Heart right ventricle (tissue), 16 donors: ENCODE measurements at regions of chr1 and their contacts with region 1.

Region 1: DNA sequence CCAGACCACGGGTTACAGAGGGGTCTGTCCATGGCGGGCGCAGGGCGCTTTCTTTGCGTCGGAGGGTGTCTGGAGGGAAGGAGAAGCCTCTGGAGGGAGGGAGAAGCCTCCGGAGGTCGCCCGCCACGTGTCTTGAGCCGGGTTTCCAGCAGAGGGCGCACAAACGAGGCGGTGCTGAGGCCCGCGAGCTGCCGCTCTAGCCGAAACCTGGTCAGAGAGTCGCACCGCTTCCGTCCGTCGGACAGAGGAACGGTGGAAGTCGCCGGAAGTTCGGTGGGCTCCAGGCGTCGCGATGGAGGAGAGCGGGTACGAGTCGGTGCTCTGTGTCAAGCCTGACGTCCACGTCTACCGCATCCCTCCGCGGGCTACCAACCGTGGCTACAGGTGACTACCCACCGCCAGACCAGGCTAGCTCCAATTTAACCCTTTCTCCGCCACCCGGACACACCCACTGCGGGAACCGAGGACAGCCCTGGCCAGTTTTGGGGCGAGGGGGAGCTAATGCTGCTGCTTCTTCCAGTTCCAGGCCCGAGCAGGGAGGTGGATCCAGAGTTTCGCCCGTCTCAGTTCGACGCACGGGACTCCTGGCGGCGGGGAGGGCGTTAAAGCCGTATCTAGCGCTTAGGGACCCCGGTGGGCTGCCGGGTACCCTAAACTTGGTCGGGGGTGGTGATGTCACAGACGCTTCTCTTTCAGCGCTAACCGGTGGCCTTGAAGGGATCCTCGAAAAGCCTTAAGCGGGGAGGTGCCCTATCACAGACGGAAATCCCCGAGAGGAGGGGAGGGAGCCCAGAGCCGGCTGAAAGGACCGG is at the start of gene NECAP2:
- DNase-seq: peak; percentile 96
- ATAC-seq: peak; percentile 95 to 98 (median 96)
- H3K4me3 ChIP-seq: peak within 1 kb of the TSS; percentile 64 to 100 (median 93)
- H3K27ac ChIP-seq: peak within 1 kb of the TSS; percentile 73 to 98 (median 84)
- H3K4me1 ChIP-seq: peaks cover 19 to 61% (median 33%) of the 10 kb centered on the region in 9 donors
- H3K27me3 ChIP-seq: no peaks in the 10 kb centered on the region
- CTCF ChIP-seq: peak; percentile 85 to 98 (median 90)
- total RNA-seq, gene NECAP2: 7.9 to 34.0 (median 11.7) TPM

Region 2: GRCh38 chr1:16276302-16277030 is 164.2 kb before region 1 on chr1:
- intact Hi-C with region 1: no loop called
- DNase-seq: no peak
- ATAC-seq: peak in 2 of 8 donors; percentile 61 to 71
- H3K4me3 ChIP-seq: no peak overlapping the region
- H3K27ac ChIP-seq: peak overlapping the region in 3 of 10 donors; percentile 10 to 40 (median 11)
- H3K4me1 ChIP-seq: peaks cover 0 to 25% (median 12%) of the 10 kb centered on the region in 9 donors
- H3K27me3 ChIP-seq: no peaks in the 10 kb centered on the region
- CTCF ChIP-seq: no peak

Region 3: GRCh38 chr1:16375521-16376359 is 64.9 kb before region 1 on chr1:
- intact Hi-C with region 1: loop called in 3 of 10 experiments (anchors 2 to 10 kb)
- DNase-seq: no peak
- ATAC-seq: peak; percentile 25 to 72 (median 47)
- H3K4me3 ChIP-seq: peak overlapping the region in 4 of 10 donors; percentile 0 to 18 (median 3)
- H3K27ac ChIP-seq: peak overlapping the region in 9 of 10 donors; percentile 70 to 86 (median 77)
- H3K4me1 ChIP-seq: peaks cover 4 to 86% (median 64%) of the 10 kb centered on the region in 9 donors
- H3K27me3 ChIP-seq: no peaks in the 10 kb centered on the region
- CTCF ChIP-seq: no peak

Region 4: GRCh38 chr1:16459352-16459925 is 18.8 kb after region 1 on chr1:
- intact Hi-C with region 1: no loop called
- DNase-seq: no peak
- ATAC-seq: peak in 6 of 8 donors; percentile 13 to 78 (median 44)
- H3K4me3 ChIP-seq: no peak overlapping the region
- H3K27ac ChIP-seq: no peak overlapping the region
- H3K4me1 ChIP-seq: peaks cover 0 to 33% (median 12%) of the 10 kb centered on the region in 9 donors
- H3K27me3 ChIP-seq: no peaks in the 10 kb centered on the region
- CTCF ChIP-seq: no peak

Region 5: DNA sequence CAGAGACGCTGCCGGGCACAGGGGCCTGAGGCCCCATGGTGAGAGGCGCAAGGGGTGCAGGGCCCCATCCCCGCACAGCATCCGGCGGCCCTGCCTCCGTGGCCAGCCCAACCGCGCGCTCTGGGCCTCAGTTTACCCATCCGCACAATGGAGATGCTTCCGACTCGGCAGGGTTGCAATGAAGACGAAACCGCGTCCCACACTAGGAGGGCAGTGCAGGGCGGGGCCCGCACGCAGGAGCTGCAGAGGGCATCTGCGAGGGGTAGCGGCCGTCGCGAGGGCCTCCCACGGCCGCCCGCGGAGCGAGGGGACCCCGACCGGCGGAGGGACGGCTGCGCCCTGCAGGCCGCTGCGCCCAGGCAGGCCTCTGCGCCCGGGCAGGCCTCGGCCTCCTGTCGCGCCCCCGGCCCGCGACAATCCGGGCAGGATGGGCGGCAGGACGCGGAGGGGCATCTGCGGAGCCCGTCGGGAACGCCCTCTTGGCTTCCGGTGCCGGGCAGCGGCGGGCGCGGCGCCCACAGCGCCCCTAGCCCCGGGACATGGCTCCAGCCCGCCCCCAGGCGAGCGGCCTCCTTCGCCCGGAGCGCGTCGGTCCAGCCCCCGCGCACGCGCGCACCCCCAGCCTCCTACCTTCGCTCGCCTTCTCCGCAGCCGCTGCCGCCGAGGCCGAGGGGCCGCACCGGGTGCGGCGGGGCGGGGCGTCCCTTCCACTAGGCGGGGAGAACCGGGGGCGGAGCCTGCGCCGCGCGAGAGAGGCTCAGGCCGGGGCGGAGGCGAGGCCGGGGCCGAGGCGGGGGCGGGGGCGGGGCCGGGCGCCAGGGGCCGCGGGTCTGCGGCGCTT is 58.1 kb after region 1 on chr1:
- intact Hi-C with region 1: loop called in 4 of 10 experiments (anchors 1 to 10 kb)
- DNase-seq: peak; percentile 89 to 92
- ATAC-seq: peak; percentile 89 to 97 (median 94)
- H3K4me3 ChIP-seq: peak overlapping the region; percentile 59 to 90 (median 80)
- H3K27ac ChIP-seq: peak overlapping the region; percentile 25 to 93 (median 86)
- H3K4me1 ChIP-seq: peaks cover 0 to 22% (median 14%) of the 10 kb centered on the region in 9 donors
- H3K27me3 ChIP-seq: no peaks in the 10 kb centered on the region
- CTCF ChIP-seq: peak in 3 of 9 donors; percentile 37 to 45 (median 42)